ENCODE measurements at regions of chr9 and their contacts with region 1.

Region 1: DNA sequence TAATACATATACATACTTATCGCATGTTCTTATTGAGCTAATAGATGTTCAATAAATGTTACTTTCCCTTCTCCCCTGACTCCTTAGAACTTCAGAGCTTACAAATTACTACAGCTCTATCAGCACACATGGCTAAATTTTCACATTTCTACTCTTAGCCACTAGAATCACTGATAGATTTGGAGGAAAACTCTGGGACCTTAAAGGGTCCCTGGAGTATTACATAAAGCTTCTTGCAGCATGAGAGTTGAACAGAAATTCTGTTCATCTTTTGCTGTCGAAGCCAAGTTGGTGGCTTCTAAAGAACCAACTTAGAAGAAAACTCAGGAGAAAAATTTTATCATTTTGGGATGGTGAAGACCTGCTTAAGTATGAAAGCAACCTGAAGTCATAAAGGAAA is 15.5 kb downstream of the B4GALT1 start:
- DNase-seq: no peak
- ATAC-seq: 0 out of 2 replicates have a peak, but pooled peaks have one; percentile 6
- H3K4me3 ChIP-seq: no peak overlapping the region; the same call in 1 of the 2 replicates
- H3K27ac ChIP-seq: peak overlapping the region; percentile 50
- H3K4me1 ChIP-seq: peaks cover 33% of the 10 kb centered on the region
- H3K27me3 ChIP-seq: no peaks in the 10 kb centered on the region
- CTCF ChIP-seq: no peak

Region 2: GRCh38 chr9:31837211-31837610 is 1314.4 kb before region 1 on chr9:
- CTCF ChIA-PET with region 1: no interaction called
- POLR2A ChIA-PET with region 1: interaction called, 15 read pairs
- intact Hi-C with region 1: no loop called
- DNase-seq: no peak
- ATAC-seq: no peak
- H3K4me3 ChIP-seq: no peak overlapping the region
- H3K27ac ChIP-seq: no peak overlapping the region
- H3K4me1 ChIP-seq: no peaks in the 10 kb centered on the region
- H3K27me3 ChIP-seq: peaks cover 8% of the 10 kb centered on the region; the same call in 1 of the 2 replicates
- CTCF ChIP-seq: no peak

Region 3: GRCh38 chr9:33017283-33018041 is 134.1 kb before region 1 on chr9:
- CTCF ChIA-PET with region 1: no interaction called
- POLR2A ChIA-PET with region 1: no interaction called
- intact Hi-C with region 1: no loop called
- DNase-seq: no peak
- ATAC-seq: no peak
- H3K4me3 ChIP-seq: no peak overlapping the region
- H3K27ac ChIP-seq: no peak overlapping the region
- H3K4me1 ChIP-seq: 0 out of 2 replicates have a peak, but pooled peaks cover under 1% of the 10 kb centered on the region
- H3K27me3 ChIP-seq: no peaks in the 10 kb centered on the region
- CTCF ChIP-seq: no peak

Region 4: DNA sequence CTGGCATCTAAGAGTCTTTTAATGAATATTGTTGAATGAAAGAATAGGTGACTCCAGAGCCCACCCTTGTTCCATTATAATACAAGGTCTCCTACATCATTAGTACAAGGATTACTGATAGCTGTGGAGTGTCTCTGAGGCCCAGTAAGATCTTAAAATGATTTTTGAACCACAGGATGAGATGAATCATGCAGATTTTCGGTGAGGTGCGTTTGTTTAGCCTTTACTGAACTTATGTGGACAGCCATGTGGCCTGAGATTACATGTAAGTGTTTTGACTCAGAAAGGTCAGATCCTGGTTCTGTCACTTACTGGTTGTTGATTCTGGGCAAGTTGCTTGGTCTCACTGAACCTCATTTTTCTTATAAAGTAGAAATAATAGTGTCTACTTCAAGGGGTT is 160.4 kb after region 1 on chr9:
- CTCF ChIA-PET with region 1: no interaction called
- POLR2A ChIA-PET with region 1: no interaction called
- intact Hi-C with region 1: no loop called
- DNase-seq: peak; percentile 9
- ATAC-seq: no peak
- H3K4me3 ChIP-seq: no peak overlapping the region
- H3K27ac ChIP-seq: no peak overlapping the region
- H3K4me1 ChIP-seq: no peaks in the 10 kb centered on the region
- H3K27me3 ChIP-seq: no peaks in the 10 kb centered on the region
- CTCF ChIP-seq: no peak